ENCODE measurements at regions of chr16 and their contacts with region 1.

Region 1: DNA sequence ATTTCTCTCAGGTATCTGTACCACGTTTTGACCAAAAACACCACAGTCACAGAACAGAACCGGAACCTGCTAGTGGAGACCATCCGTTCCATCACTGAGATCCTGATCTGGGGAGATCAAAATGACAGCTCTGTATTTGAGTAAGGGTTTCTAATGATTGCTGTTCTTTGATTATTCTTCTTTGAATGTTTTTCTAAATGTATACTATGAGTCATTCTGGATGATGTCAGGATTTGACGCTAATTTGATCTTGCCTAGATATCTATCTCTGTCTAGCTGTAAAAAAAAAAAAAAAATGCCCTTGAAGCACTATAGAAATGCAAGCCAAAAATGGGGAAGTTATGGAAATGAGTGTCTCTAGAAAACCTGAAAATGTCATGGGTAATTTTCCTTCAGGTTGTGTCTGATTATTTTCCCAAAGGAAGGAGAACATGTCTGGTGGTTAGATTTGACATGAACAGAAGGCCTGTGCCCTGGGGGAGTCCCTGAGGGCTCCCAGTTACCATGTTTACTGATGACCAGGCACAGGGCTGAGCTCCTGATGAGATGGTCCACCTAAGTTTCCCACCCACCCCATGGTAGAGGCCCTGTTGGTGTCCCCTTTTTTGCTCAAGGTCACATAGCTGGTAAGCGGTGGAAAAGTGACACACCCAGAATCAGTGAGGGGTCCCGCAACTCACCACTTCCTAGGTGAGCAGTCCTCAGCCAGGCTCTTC is 13.6 kb downstream of the CLEC16A start:
- DNase-seq: peak; percentile 31
- ATAC-seq: peak; percentile 63
- H3K4me3 ChIP-seq: no peak overlapping the region
- H3K4me3 Mint-ChIP-seq: peak overlapping the region; percentile 53
- H3K27ac ChIP-seq: peak overlapping the region in 1 of 2 donors; percentile 22
- H3K27ac Mint-ChIP-seq: peak overlapping the region; percentile 62
- H3K4me1 ChIP-seq: peaks cover 21 to 30% of the 10 kb centered on the region in 2 donors
- H3K4me1 Mint-ChIP-seq: peaks cover 49% of the 10 kb centered on the region
- H3K27me3 ChIP-seq: no peaks in the 10 kb centered on the region
- H3K27me3 Mint-ChIP-seq: no peaks in the 10 kb centered on the region
- CTCF ChIP-seq: no peak

Region 2: DNA sequence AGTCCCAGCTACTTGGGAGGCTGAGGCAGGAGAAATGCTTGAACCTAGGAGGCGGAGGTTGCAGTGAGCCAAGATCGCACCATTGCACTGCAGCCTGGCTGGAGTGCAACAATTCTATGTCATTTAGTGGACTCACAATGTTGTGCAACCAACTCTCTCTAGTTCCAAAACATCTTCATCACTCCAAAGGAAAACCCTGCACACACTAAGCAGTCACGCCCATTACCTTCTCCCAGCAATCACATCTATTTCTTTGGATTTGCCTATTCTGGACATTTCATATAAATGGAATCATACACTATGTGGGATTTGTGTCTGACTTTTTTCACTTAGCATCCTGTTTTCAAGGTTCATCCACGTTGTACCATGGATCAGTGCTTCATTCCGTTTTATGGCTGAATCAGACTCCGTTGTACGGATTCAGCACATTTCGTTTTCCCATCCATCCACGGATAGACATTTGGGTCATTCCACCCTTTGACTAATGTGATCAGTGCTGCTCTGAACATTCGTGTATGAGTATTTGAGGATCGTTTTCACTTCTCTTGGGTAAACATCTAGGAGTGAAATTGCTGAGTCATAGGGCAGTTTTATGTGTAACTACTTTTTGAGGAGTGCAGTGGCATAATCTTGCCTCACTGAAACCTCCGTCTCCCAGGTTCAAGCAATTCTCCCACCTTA is 332.2 kb before region 1 on chr16:
- CTCF ChIA-PET with region 1: no interaction called
- POLR2A ChIA-PET with region 1: no interaction called
- intact Hi-C with region 1: no loop called
- DNase-seq: no peak
- ATAC-seq: no peak
- H3K4me3 ChIP-seq: no peak overlapping the region
- H3K4me3 Mint-ChIP-seq: no peak overlapping the region
- H3K27ac ChIP-seq: no peak overlapping the region
- H3K27ac Mint-ChIP-seq: no peak overlapping the region
- H3K4me1 ChIP-seq: no peaks in the 10 kb centered on the region
- H3K4me1 Mint-ChIP-seq: peaks cover 2% of the 10 kb centered on the region
- H3K27me3 ChIP-seq: no peaks in the 10 kb centered on the region
- H3K27me3 Mint-ChIP-seq: peaks cover 25% of the 10 kb centered on the region
- CTCF ChIP-seq: no peak

Region 3: GRCh38 chr16:10944249-10945064 is 13.5 kb before region 1 on chr16 and contains the start of gene CLEC16A:
- CTCF ChIA-PET with region 1: interaction called, 142 read pairs
- POLR2A ChIA-PET with region 1: interaction called, 4 read pairs
- intact Hi-C with region 1: no loop called
- DNase-seq: peak; percentile 96
- ATAC-seq: peak; percentile 71
- H3K4me3 ChIP-seq: peak within 1 kb of the TSS; percentile 64 to 91 (median 77)
- H3K4me3 Mint-ChIP-seq: peak within 1 kb of the TSS; percentile 90
- H3K27ac ChIP-seq: peak within 1 kb of the TSS; percentile 54 to 83
- H3K27ac Mint-ChIP-seq: peak within 1 kb of the TSS; percentile 81
- H3K4me1 ChIP-seq: peaks cover 69 to 79% of the 10 kb centered on the region in 2 donors
- H3K4me1 Mint-ChIP-seq: peaks cover 78% of the 10 kb centered on the region
- H3K27me3 ChIP-seq: no peaks in the 10 kb centered on the region
- H3K27me3 Mint-ChIP-seq: no peaks in the 10 kb centered on the region
- CTCF ChIP-seq: no peak
- total RNA-seq, gene CLEC16A: 79.5 and 82.3 TPM in 2 replicates

Region 4: DNA sequence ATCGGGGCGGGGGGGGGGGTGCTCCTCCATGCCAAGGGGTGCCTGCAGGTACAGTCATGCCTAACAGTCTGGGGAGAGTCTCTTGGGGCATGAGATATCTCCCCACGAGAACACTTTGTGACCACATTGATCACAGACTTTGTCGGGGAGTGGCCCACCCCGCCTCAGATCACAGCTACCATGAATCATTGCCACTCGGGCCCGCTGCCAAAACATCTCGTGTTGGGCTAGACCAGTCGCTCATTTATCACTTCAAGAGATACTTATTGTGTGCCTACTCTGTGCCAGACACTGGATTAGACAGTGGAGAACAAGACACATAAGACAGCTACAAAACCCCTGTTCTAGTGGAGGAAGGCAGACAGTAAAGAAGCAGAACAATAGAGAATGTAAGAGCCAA is 59.1 kb after region 1 on chr16:
- CTCF ChIA-PET with region 1: no interaction called
- POLR2A ChIA-PET with region 1: no interaction called
- intact Hi-C with region 1: no loop called
- DNase-seq: no peak
- ATAC-seq: no peak
- H3K4me3 ChIP-seq: no peak overlapping the region
- H3K4me3 Mint-ChIP-seq: no peak overlapping the region
- H3K27ac ChIP-seq: no peak overlapping the region
- H3K27ac Mint-ChIP-seq: no peak overlapping the region
- H3K4me1 ChIP-seq: no peaks in the 10 kb centered on the region
- H3K4me1 Mint-ChIP-seq: no peaks in the 10 kb centered on the region
- H3K27me3 ChIP-seq: no peaks in the 10 kb centered on the region
- H3K27me3 Mint-ChIP-seq: no peaks in the 10 kb centered on the region
- CTCF ChIP-seq: no peak

Region 5: DNA sequence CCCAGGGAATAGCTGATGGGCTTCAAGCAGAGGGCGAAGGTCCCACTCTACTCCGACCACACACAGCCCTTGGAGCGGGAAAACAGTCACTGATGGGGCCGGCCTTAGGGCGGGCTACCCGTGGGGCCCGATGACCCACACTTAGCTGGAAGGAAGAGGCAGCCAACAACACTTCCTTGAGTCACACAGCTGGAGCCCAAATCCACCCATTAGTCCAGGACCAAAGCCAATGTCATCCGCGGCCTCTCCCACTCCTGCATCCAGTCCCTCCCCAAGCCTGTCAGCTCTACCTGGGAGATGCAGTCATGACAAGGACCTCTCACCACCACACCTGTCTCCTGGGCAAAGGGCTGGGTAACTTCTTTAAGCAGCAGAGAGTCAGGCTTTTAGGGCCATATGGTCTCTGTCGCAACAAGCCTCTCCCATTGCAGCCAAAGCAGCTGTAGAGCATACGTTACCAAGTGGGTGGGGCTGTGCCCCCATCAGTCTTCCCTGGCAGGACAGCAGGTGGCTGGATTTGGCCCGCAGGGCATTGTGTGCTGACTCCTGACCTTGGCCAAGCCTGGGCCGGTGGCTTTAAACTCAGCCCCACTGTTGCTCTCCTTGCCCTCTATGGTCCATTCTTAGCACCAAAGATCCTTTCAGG is 187.4 kb after region 1 on chr16:
- CTCF ChIA-PET with region 1: no interaction called
- POLR2A ChIA-PET with region 1: no interaction called
- intact Hi-C with region 1: no loop called
- DNase-seq: no peak
- ATAC-seq: no peak
- H3K4me3 ChIP-seq: no peak overlapping the region
- H3K4me3 Mint-ChIP-seq: no peak overlapping the region
- H3K27ac ChIP-seq: no peak overlapping the region
- H3K27ac Mint-ChIP-seq: no peak overlapping the region
- H3K4me1 ChIP-seq: no peaks in the 10 kb centered on the region
- H3K4me1 Mint-ChIP-seq: no peaks in the 10 kb centered on the region
- H3K27me3 ChIP-seq: no peaks in the 10 kb centered on the region
- H3K27me3 Mint-ChIP-seq: no peaks in the 10 kb centered on the region
- CTCF ChIP-seq: no peak

Region 6: DNA sequence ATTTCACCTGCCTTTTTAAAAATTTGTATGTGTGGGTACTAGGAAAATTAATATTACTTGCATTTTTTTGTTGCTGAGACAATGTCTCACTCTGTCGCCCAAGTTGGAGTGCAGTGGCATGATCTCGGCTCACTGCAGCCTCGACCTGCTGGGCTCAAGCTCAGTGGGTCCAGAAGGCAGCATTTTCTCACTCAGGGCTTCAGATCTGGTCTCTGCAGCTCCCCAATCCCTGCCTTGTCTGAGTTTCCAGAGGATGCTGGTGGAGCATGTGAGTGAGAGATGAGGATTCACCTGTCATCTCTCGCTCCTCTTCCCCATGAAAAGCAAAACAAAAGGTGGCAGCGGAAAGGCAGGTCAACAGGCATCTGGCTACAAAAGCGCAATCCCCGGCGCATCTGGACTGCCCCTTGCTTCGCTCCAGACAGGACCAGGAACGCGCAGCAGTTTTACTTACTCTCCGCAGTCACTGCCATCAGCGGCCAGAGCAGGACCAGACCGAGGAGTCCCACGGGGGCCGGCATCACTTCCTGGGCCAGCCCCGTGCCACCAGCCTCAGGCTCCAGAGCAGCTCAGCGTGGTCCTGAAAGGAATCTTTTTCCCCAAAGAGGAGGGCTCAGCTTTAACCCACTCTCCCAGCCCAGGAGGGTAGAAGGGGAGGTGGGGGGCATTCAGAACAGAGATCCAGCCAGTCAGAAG is 568.9 kb after region 1 on chr16:
- CTCF ChIA-PET with region 1: interaction called, 31 read pairs
- POLR2A ChIA-PET with region 1: no interaction called
- intact Hi-C with region 1: loop called (anchors 10 kb)
- DNase-seq: no peak
- ATAC-seq: no peak
- H3K4me3 ChIP-seq: no peak overlapping the region
- H3K4me3 Mint-ChIP-seq: no peak overlapping the region
- H3K27ac ChIP-seq: no peak overlapping the region
- H3K27ac Mint-ChIP-seq: no peak overlapping the region
- H3K4me1 ChIP-seq: no peaks in the 10 kb centered on the region
- H3K4me1 Mint-ChIP-seq: peaks cover 3% of the 10 kb centered on the region
- H3K27me3 ChIP-seq: peaks cover 0 to 4% (median 0%) of the 10 kb centered on the region in 4 experiments
- H3K27me3 Mint-ChIP-seq: peaks cover 8% of the 10 kb centered on the region
- CTCF ChIP-seq: no peak

Measured in B cell (primary cell).